ENCODE measurements at regions of chr1 and their contacts with region 1.

Region 1: DNA sequence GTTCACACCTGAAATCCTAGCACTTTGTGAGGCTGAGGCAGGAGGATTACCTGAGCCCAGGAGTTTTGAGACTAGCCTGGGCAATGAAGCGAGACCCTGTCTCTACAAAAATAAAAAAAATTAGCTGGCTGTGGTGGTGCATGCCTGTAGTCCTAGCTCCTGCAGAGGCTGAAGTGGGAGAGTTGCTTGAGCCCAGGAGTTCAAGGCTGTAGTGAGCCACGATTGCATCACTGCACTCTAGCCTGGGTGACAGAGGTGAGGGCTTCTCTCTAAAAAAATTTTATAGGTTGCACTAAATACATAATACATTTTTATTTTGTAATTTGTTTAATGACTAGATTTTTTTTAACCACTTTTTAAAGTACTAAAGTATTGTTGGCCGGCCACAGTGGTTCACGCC is 6.1 kb downstream of the PARK7 start:
- DNase-seq: no peak
- H3K4me3 Mint-ChIP-seq: no peak overlapping the region
- H3K27ac Mint-ChIP-seq: no peak overlapping the region
- H3K4me1 Mint-ChIP-seq: peaks cover 44% of the 10 kb centered on the region
- H3K27me3 Mint-ChIP-seq: no peaks in the 10 kb centered on the region

Region 2: DNA sequence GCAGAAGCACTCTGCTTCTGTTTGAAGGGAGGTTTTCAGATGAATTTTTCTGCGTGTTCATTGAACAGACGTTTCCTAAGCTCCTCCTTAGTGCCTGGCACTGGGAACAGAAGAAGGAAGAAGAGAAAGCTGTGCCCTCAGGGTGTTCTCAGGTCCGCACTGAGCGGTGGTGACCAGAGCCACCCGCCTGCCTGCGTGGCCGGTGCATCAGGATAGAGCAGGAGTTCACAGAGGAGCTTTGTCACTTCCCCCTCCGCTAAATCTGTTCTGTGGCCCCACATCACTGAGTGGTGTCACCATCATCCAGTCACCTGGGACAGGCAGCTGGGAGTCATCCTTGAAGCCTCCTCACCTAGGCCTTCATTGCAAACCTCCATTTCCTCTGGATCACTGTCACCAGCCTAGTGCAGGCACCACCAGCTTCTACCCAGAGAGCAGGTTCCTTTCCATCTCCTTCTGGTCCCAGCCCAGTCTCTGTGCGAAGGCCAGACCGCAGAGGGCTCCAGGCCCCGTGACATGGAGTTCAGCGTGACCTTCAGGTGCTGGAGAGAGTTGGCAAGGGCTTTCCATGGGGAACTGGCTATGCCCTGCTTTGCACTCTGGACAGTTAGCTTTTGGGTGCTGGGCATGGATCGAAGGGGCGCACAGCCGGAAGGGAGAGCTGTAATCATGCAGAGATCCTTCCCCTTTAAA is 15.6 kb after region 1 on chr1:
- intact Hi-C with region 1: loop called (anchors 2 kb)
- DNase-seq: no peak
- H3K4me3 Mint-ChIP-seq: no peak overlapping the region
- H3K27ac Mint-ChIP-seq: no peak overlapping the region
- H3K4me1 Mint-ChIP-seq: peaks cover 11% of the 10 kb centered on the region
- H3K27me3 Mint-ChIP-seq: no peaks in the 10 kb centered on the region

Region 3: GRCh38 chr1:9413148-9413876 is 1445.7 kb after region 1 on chr1:
- intact Hi-C with region 1: no loop called
- DNase-seq: peak; percentile 52
- H3K4me3 Mint-ChIP-seq: peak overlapping the region; percentile 57
- H3K27ac Mint-ChIP-seq: peak overlapping the region; percentile 82
- H3K4me1 Mint-ChIP-seq: peaks cover 50% of the 10 kb centered on the region
- H3K27me3 Mint-ChIP-seq: peaks cover 11% of the 10 kb centered on the region